Sigmoid colon (tissue), 7 donors: ENCODE measurements at regions of chr7 and their contacts with region 1.

Region 1: GRCh38 chr7:84194543-84195271 is at the start of gene SEMA3A:
- DNase-seq: peak; percentile 84
- H3K4me3 ChIP-seq: peak within 1 kb of the TSS; percentile 44 to 59 (median 53)
- H3K27ac ChIP-seq: peak within 1 kb of the TSS; percentile 75 to 86 (median 82)
- H3K4me1 ChIP-seq: peaks cover 0 to 31% (median 10%) of the 10 kb centered on the region in 4 donors
- H3K27me3 ChIP-seq: no peaks in the 10 kb centered on the region
- CTCF ChIP-seq: peak in 2 of 4 experiments; percentile 20 to 44
- EP300 ChIP-seq: no peak
- POLR2A ChIP-seq: no peak
- total RNA-seq, gene SEMA3A: 50.1 to 83.8 (median 58.4) TPM

Region 2: GRCh38 chr7:83976295-83976694 is 218.4 kb before region 1 on chr7:
- intact Hi-C with region 1: loop called (anchors 5 kb)
- DNase-seq: no peak
- H3K4me3 ChIP-seq: no peak overlapping the region
- H3K27ac ChIP-seq: no peak overlapping the region
- H3K4me1 ChIP-seq: peaks cover 0 to 8% (median 3%) of the 10 kb centered on the region in 4 donors
- H3K27me3 ChIP-seq: no peaks in the 10 kb centered on the region
- CTCF ChIP-seq: peak; percentile 49 to 59 (median 56)
- EP300 ChIP-seq: no peak
- POLR2A ChIP-seq: no peak

Region 3: DNA sequence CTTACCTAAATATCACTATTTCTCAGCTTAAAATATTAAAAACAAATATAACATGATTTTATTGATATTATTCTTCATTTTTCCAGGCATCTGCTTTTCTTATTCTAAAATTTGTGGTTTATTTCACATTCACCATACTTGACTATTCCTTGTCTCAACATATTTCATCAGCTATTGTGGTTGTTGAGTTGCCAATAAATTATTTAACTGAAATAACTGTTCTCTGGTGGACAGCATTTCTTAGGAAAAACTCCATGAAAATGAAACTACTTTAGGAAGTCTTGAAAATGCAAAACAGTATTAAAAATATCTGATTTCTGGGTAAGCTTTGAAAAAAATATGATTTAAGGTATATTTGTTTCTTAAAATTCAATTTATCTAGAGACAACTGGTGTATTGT is 122.8 kb after region 1 on chr7:
- intact Hi-C with region 1: loop called (anchors 2 kb)
- DNase-seq: no peak
- H3K4me3 ChIP-seq: peak overlapping the region in 3 of 4 donors; percentile 34 to 48 (median 44)
- H3K27ac ChIP-seq: peak overlapping the region in 3 of 4 donors; percentile 71 to 80 (median 74)
- H3K4me1 ChIP-seq: peaks cover 0 to 4% (median 0%) of the 10 kb centered on the region in 4 donors
- H3K27me3 ChIP-seq: no peaks in the 10 kb centered on the region
- CTCF ChIP-seq: no peak
- EP300 ChIP-seq: no peak
- POLR2A ChIP-seq: no peak

Region 4: DNA sequence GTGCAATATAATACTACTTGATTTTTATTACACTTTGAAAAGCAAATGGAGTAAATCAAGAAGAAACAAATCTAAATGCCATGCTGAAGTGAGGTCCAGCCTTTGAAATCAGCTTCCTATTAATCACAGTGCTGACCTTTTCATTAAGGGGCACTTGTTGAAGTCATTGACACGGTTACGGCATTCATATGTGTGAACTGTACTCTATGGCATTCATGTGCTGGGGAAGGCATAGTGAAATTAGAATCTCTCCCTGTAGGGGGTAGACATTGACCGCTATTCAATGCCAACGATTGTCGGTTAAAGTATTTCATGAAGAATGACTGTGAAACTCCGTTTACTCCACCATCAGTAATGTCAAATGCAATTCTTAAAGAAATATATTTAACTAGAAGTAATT is 296.0 kb after region 1 on chr7:
- intact Hi-C with region 1: loop called (anchors 10 kb)
- DNase-seq: no peak
- H3K4me3 ChIP-seq: peak overlapping the region; percentile 6 to 38 (median 30)
- H3K27ac ChIP-seq: peak overlapping the region in 3 of 4 donors; percentile 58 to 71 (median 60)
- H3K4me1 ChIP-seq: no peaks in the 10 kb centered on the region
- H3K27me3 ChIP-seq: no peaks in the 10 kb centered on the region
- CTCF ChIP-seq: peak in 1 of 4 experiments; percentile 13
- EP300 ChIP-seq: no peak
- POLR2A ChIP-seq: no peak

Region 5: DNA sequence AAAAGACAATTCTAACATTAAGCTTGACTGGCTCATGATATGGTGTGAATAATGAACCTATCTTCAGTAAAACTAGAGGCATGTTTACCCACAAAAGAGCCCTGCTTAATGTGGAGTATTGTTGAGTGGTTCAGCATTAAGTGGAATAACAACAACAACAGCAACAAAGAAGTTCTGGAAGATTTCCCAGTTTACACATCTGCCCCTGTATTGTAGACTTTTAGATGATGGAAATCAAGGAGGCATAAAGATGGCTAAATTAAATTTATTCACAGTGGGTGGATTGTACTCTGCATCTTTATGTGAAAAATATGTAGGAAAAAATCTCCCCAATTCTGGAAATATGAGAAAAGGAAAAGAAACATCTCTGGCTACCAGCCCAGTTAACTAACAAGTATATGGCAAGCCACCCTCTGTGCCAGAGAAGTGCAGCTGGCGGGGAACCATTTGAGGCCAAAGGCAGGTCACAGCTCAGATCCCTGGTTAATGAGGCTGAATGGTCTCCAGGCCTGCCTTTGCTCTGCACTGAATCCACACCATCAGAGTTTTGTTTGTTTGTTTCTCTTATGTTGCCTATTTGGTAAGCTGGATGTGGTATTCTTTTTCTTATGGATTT is 806.1 kb after region 1 on chr7:
- intact Hi-C with region 1: loop called (anchors 10 kb)
- DNase-seq: no peak
- H3K4me3 ChIP-seq: no peak overlapping the region
- H3K27ac ChIP-seq: no peak overlapping the region
- H3K4me1 ChIP-seq: peaks cover 0 to 43% (median 23%) of the 10 kb centered on the region in 4 donors
- H3K27me3 ChIP-seq: no peaks in the 10 kb centered on the region
- CTCF ChIP-seq: no peak
- EP300 ChIP-seq: no peak
- POLR2A ChIP-seq: no peak